ENCODE measurements at regions of chr5 and their contacts with region 1.

Region 1: GRCh38 chr5:123511648-123512605 is at the start of gene CSNK1G3:
- DNase-seq: peak; percentile 81
- ATAC-seq: peak; percentile 91
- H3K4me3 Mint-ChIP-seq: peak within 1 kb of the TSS; percentile 99
- H3K27ac Mint-ChIP-seq: peak within 1 kb of the TSS; percentile 99
- H3K4me1 Mint-ChIP-seq: peaks cover 47% of the 10 kb centered on the region
- H3K27me3 Mint-ChIP-seq: no peaks in the 10 kb centered on the region
- CTCF ChIP-seq: no peak
- total RNA-seq, gene CSNK1G3: 79.9 and 82.7 TPM in 2 replicates

Region 2: GRCh38 chr5:121968910-121969607 is 1542.9 kb before region 1 on chr5:
- CTCF ChIA-PET with region 1: no interaction called
- POLR2A ChIA-PET with region 1: no interaction called
- intact Hi-C with region 1: loop called (anchors 10 kb)
- DNase-seq: no peak
- ATAC-seq: no peak
- H3K4me3 Mint-ChIP-seq: no peak overlapping the region
- H3K27ac Mint-ChIP-seq: no peak overlapping the region
- H3K4me1 Mint-ChIP-seq: peaks cover 39% of the 10 kb centered on the region
- H3K27me3 Mint-ChIP-seq: no peaks in the 10 kb centered on the region
- CTCF ChIP-seq: no peak

Region 3: DNA sequence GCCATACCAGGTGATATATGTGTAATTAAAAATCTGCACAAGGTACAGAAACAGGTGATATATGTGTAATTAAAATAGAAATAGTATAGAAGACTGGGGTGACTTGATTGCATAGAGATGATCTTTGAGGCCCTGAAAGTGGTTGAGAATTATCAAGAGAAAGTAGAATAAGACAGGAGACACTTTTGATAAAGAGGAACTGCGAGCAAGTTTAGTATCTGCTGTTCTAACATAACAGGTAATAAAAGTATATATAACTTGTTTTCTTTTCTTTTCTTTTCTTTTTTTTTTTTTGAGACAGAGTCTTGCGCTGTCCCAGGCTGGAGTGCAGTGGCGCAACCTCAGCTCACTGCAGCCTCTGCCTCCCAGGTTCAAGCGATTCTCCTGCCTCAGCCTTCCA is 731.6 kb before region 1 on chr5:
- CTCF ChIA-PET with region 1: no interaction called
- POLR2A ChIA-PET with region 1: no interaction called
- intact Hi-C with region 1: loop called (anchors 10 kb)
- DNase-seq: no peak
- ATAC-seq: peak; percentile 19
- H3K4me3 Mint-ChIP-seq: peak overlapping the region; percentile 64
- H3K27ac Mint-ChIP-seq: peak overlapping the region; percentile 85
- H3K4me1 Mint-ChIP-seq: peaks cover 72% of the 10 kb centered on the region
- H3K27me3 Mint-ChIP-seq: no peaks in the 10 kb centered on the region
- CTCF ChIP-seq: no peak

Region 4: GRCh38 chr5:123474228-123474627 is 37.7 kb before region 1 on chr5:
- CTCF ChIA-PET with region 1: no interaction called
- POLR2A ChIA-PET with region 1: no interaction called
- intact Hi-C with region 1: no loop called
- DNase-seq: no peak
- ATAC-seq: no peak
- H3K4me3 Mint-ChIP-seq: no peak overlapping the region
- H3K27ac Mint-ChIP-seq: no peak overlapping the region
- H3K4me1 Mint-ChIP-seq: no peaks in the 10 kb centered on the region
- H3K27me3 Mint-ChIP-seq: peaks cover 14% of the 10 kb centered on the region
- CTCF ChIP-seq: no peak

Region 5: DNA sequence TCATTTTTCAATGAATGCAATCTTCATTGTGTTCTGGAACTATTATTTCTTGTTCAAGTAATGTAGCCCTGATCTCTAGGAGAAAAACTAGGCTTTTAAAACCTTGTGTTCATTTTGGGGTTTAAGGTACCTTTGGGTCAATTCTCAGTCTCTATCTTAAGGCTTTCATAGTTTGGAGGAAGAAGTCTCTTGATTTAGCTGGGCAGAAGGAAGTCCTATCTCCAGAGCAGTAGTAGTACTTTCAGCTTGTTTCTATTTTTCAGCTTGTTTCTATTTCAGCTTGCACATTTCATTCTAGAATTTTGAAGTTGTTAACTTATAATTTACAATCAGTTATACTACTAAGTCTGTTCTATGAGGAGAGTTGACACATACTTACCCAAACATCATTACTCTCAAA is 15.3 kb after region 1 on chr5:
- CTCF ChIA-PET with region 1: no interaction called
- POLR2A ChIA-PET with region 1: interaction called, 11 read pairs
- intact Hi-C with region 1: loop called (anchors 2 kb)
- DNase-seq: no peak
- ATAC-seq: no peak
- H3K4me3 Mint-ChIP-seq: no peak overlapping the region
- H3K27ac Mint-ChIP-seq: no peak overlapping the region
- H3K4me1 Mint-ChIP-seq: peaks cover 76% of the 10 kb centered on the region
- H3K27me3 Mint-ChIP-seq: no peaks in the 10 kb centered on the region
- CTCF ChIP-seq: no peak